ENCODE measurements at regions of chr15 and their contacts with region 1.

Region 1: DNA sequence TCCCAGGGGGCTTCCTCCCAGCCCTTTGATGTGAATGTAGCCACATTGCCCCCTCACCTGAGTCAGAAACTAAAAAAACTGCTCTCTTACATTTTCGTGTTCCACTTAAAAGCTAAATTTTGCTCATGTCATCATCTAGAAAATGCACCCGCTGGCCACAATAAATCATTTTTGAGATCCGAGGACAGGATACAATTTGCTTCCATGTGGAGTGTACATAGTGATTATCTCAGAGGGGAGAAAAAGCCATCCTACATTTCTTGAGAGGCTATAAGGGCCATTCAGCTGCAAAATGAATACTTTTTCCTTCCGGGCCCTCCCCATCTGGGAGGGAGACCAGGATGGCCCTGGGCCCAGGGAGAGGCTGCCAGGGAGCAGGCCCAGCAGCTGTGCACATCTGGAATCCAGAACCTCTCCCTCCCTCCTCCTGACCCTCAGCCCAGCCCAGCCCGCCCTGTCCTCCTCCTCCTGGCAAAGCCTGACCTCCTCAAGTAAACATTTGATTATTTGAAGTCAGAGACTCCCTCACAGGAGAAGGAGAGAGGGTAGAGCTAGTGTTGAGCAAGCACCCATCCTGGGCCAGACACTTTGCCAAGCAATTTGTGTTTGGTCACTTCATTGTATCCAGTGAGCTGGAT is 59.1 kb downstream of the CORO2B start:
- DNase-seq: no peak
- CTCF ChIP-seq: no peak

Region 2: DNA sequence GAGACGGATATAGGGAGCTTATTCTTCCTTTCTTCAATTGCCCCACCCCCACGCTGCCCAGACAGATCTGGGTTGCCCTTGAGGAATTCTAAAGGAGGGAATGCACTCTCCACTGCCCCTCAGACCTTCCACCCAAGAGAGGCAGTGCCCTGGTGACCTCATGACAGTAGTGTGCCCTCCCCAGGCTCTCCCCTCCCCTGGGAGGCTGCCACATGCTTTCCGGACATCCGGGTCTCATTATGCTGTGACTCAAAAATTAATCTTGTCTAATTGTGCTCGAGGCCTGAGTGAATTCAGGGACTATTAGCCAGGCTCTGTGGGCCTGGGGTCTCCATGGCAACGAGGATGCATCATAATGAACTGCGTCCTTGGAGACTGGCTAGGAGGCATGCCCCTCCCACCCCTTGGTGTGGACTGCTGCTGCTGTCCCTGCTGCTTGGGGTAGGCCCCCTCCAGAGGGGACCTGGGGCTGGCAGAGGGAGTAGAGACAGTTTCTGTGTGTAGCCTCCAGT is 38.3 kb before region 1 on chr15:
- CTCF ChIA-PET with region 1: no interaction called
- POLR2A ChIA-PET with region 1: no interaction called
- DNase-seq: no peak
- CTCF ChIP-seq: no peak

Region 3: DNA sequence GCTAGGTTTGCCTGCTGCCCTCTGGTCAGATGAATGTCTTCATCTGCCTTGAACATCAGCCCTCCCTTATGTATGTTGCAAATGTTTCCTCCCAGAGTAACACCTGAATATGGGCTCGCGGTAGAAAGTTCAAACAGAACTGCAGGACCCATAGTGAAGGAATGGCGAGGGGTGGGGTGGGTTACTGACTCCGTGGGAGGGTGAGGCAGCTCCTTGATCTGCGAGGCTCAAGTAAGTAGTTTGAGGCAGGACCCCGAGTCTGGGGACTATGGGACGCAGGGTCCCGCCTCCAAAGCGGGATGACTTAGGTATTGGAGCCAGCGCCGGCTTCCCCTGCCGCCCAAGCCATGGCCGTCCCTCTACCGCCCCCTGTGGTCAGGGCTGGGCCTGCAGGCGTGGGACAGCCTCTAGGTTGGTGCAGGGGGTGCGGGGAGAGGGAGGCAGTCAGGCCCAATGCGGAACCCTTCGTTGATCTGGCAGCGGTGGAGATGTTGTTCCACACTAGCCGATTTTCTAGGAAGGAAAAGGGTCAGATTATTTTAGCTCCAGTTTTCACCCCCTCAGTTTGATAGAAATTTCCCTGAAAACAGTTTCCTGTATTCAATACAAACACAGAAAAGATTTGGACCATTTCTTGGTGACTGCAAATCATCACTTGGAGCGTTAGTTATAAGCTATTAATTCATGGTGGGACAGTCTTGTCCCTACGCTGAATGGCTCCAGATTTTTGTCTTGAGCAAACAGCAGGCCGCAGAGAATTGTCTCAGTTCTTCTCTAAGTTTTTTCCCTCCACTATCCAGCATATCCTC is 13.2 kb after region 1 on chr15:
- CTCF ChIA-PET with region 1: interaction called, 16 read pairs
- POLR2A ChIA-PET with region 1: no interaction called
- DNase-seq: peak; percentile 59
- CTCF ChIP-seq: peak; percentile 46

Measured in GM10248 (cell line).